ENCODE measurements at regions of chr13 and their contacts with region 1.

Region 1: DNA sequence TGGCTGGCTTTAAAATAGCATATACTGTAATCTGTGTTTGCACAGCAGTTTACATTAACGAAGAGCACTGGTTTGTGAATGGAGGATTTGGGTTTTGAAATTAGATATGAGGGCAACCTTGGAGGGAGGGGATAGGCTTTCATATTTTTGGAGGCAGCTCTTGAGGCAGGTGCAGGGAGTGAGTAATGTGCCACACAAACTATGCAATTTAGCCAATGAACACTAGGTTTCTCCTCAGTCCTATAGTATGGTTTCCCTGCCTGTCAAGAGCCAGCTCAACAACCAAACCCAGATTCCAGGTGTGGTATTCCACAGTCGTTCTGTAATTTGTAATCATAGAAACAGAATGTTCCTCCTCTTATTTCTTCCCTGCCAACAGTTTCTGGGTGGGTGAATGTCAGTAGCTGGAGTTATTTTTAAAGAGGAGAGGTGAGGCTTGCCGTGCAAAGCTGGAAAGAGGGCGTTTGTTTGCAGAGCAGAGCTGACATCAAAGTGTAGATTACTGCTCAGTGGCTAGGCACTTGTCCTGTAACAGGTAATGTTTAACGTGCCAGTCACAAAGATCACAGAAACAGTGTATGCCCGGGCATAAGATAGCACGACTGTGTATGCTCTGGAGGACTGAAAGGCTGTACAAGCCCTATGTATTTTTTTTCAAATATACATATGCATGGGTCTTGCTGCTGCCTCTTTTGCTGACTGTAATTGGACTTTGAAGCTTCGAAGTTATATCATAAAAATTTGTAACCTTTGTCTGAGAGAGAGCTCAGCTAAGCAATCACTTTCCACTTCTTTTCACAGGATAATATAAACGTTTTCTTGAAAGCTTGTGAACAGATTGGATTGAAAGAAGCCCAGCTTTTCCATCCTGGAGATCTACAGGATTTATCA is 124.2 kb downstream of the LMO7 start:
- DNase-seq: peak; percentile 31
- H3K4me3 Mint-ChIP-seq: peak overlapping the region; percentile 67
- H3K27ac Mint-ChIP-seq: peak overlapping the region; percentile 11
- H3K4me1 Mint-ChIP-seq: peaks cover 72% of the 10 kb centered on the region
- H3K27me3 Mint-ChIP-seq: peaks cover 4% of the 10 kb centered on the region

Region 2: DNA sequence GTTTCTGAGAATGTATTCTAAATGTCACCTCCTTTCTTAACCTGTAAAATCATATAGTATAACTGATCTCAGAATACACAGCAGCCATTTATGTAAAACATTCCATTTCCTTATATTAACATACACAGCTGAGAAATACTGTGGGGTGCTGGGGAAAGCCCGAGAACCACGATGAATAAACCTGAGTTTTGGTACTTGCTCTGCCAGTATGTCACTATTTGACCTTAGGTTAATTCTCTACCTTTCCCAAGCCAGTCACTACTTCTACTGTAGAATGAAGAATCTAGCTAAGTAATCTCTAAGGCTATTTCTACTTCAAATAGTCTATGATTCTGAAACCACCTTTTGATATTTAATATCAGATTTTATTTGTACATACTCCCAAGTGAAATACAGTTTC is 452.2 kb before region 1 on chr13:
- CTCF ChIA-PET with region 1: no interaction called
- intact Hi-C with region 1: loop called (anchors 5 kb)
- DNase-seq: peak; percentile 83
- H3K4me3 Mint-ChIP-seq: no peak overlapping the region
- H3K27ac Mint-ChIP-seq: peak overlapping the region; percentile 70
- H3K4me1 Mint-ChIP-seq: peaks cover 45% of the 10 kb centered on the region
- H3K27me3 Mint-ChIP-seq: no peaks in the 10 kb centered on the region

Region 3: DNA sequence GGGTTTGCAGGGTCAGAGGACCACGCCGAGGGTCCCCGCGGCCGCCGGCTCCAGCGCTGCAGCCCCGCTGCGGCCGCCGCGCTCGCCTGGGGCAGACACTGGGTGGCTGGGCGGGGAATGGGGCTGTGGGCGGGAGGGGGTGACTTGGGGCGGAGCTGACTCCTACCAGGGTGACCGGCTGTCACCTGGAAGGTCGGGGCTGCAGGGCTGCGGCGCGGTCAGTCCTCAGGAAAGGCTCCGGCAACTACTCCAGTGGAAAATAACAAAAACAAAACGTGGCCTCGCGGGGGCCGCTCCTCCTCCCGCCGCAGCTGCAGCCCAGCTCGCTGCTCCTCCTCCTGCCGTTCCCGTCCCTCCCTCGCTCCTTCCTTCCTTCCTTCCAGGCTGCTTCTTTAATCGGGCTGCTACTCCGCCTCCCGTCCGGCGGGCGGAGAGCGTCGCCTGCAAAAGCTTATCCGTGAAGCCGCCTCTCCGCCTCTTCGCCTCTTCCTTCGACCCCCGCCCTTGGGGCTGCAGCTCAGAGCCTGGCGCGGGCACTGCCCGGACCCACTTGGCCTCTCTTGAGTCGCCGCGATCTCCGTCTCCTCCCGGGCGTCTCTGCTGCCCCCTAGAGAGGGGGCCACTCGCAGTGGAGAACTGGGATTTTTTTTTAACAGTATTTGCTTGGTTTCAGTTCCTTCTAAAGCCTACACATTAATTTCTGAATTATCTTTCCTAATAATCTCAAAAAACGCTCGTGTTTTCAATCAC is 278.1 kb before region 1 on chr13 and contains the start of gene TBC1D4:
- CTCF ChIA-PET with region 1: no interaction called
- intact Hi-C with region 1: loop called (anchors 5 kb)
- DNase-seq: peak; percentile 68
- H3K4me3 Mint-ChIP-seq: peak within 1 kb of the TSS; percentile 94
- H3K27ac Mint-ChIP-seq: no peak within 1 kb of the TSS
- H3K4me1 Mint-ChIP-seq: peaks cover 11% of the 10 kb centered on the region
- H3K27me3 Mint-ChIP-seq: peaks cover 53% of the 10 kb centered on the region
- total RNA-seq, gene TBC1D4: 13.4 to 19.7 TPM

Region 4: DNA sequence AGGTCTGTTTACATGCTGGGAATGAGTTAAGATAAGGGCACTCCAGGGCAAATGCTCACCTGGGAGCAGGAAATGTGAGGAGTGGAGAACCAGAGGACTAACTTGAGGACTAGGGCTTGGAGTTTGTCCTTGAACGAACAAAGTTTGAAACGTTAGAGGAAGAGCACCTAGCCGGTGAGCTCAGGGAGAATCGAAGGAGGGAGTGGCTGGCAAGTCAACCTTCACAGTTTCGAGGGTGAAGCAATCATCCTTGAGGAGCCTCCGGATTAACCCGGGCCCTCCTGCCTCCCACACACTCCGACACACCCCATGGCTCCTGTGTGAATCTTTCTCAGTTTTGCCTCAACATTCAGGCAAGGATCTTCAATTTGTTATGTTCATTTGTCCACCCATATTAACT is 65.7 kb before region 1 on chr13:
- CTCF ChIA-PET with region 1: interaction called, 50 read pairs
- intact Hi-C with region 1: no loop called
- DNase-seq: no peak
- H3K4me3 Mint-ChIP-seq: no peak overlapping the region
- H3K27ac Mint-ChIP-seq: no peak overlapping the region
- H3K4me1 Mint-ChIP-seq: peaks cover 4% of the 10 kb centered on the region
- H3K27me3 Mint-ChIP-seq: no peaks in the 10 kb centered on the region

Region 5: GRCh38 chr13:75771818-75772217 is 11.4 kb after region 1 on chr13:
- CTCF ChIA-PET with region 1: interaction called, 8 read pairs
- intact Hi-C with region 1: loop called (anchors 1 kb)
- DNase-seq: no peak
- H3K4me3 Mint-ChIP-seq: no peak overlapping the region
- H3K27ac Mint-ChIP-seq: no peak overlapping the region
- H3K4me1 Mint-ChIP-seq: peaks cover 49% of the 10 kb centered on the region
- H3K27me3 Mint-ChIP-seq: no peaks in the 10 kb centered on the region

Region 6: DNA sequence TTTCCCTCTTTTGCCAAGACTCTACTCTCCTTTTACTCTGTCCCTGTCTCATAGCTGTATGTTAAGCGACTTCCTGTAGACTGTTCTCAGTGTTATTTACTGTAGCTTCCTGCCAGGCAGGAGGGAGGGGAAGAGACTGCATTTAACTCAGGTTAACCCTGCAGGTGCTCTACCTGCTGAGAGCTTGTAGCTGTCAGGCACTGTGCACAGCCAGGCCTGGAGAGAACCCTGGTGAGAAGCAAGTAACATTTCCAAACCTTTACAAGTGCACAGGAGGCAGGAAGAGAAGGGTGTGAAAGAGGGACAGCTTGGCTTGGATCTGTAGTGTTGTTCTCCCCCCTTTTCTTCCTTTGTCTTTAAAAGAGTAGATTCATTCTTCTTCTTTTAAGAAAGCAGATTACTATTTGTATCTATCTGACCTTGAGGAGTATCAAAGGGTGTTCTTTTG is 42.8 kb after region 1 on chr13:
- CTCF ChIA-PET with region 1: interaction called, 18 read pairs
- intact Hi-C with region 1: loop called (anchors 1 kb)
- DNase-seq: peak; percentile 44
- H3K4me3 Mint-ChIP-seq: peak overlapping the region; percentile 35
- H3K27ac Mint-ChIP-seq: peak overlapping the region; percentile 48
- H3K4me1 Mint-ChIP-seq: peaks cover 51% of the 10 kb centered on the region
- H3K27me3 Mint-ChIP-seq: no peaks in the 10 kb centered on the region

Region 7: GRCh38 chr13:76828316-76828741 is 1068.0 kb after region 1 on chr13:
- CTCF ChIA-PET with region 1: no interaction called
- intact Hi-C with region 1: loop called (anchors 5 kb)
- DNase-seq: peak; percentile 60
- H3K4me3 Mint-ChIP-seq: no peak overlapping the region
- H3K27ac Mint-ChIP-seq: peak overlapping the region; percentile 69
- H3K4me1 Mint-ChIP-seq: peaks cover 12% of the 10 kb centered on the region
- H3K27me3 Mint-ChIP-seq: no peaks in the 10 kb centered on the region